WTC11 (cell line): ENCODE measurements at regions of chr20 and their contacts with region 1.

Region 1: DNA sequence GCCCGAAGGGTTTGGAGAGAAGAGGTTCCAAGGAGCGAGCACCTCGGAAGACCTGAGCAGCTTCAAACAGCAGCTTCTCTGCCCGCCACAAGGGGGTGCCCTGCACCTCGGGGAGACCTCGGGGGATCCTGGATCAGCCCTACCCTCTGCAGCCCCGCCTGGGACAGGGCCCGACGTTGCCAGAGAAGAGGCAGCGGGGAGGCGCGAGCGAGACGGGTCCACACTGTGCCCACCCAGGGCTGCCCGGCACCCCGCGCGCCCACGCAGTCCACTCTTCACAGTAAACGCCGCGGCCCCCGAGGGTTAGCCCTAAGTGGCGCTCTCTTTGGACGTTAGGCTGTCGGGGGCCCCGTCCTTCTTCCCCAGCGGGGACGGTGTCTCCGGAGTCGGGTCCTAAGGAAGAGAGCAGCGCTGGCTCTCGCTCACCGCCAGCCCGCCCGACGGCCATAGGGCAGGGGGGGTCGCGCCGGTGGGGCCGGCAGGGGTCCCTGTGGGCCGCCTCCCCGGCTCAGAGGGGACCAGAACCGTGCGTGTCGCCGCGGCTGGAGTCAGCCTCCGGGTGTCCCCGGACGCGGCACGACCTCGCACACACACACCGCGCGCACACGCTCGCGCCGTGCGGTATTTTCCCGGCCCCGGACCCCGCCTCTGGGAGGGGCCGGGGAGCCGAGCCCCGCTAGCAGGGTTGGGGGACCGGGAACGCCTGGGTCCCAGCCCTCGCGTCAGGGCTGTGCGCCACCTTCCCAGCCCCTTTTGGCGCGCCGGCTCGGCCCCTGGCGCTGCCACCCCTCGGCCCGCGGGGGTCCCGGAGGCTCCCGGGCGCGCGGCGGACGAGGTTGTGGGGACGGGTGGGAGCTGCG is 929 bp downstream of the CDH22 start:
- DNase-seq: peak; percentile 82
- ATAC-seq: peak; percentile 89
- H3K4me3 Mint-ChIP-seq: peak overlapping the region; percentile 52
- H3K27ac Mint-ChIP-seq: no peak overlapping the region
- H3K4me1 Mint-ChIP-seq: peaks cover 11% of the 10 kb centered on the region
- H3K27me3 Mint-ChIP-seq: peaks cover 72% of the 10 kb centered on the region
- CTCF ChIP-seq: peak; percentile 87

Region 2: GRCh38 chr20:46232539-46232938 is 74.8 kb before region 1 on chr20:
- CTCF ChIA-PET with region 1: no interaction called
- POLR2A ChIA-PET with region 1: no interaction called
- DNase-seq: no peak
- ATAC-seq: no peak
- H3K4me3 Mint-ChIP-seq: no peak overlapping the region
- H3K27ac Mint-ChIP-seq: no peak overlapping the region
- H3K4me1 Mint-ChIP-seq: peaks cover 7% of the 10 kb centered on the region; the same call in 1 of the 2 replicates
- H3K27me3 Mint-ChIP-seq: peaks cover 3% of the 10 kb centered on the region; the same call in 1 of the 2 replicates
- CTCF ChIP-seq: no peak

Region 3: DNA sequence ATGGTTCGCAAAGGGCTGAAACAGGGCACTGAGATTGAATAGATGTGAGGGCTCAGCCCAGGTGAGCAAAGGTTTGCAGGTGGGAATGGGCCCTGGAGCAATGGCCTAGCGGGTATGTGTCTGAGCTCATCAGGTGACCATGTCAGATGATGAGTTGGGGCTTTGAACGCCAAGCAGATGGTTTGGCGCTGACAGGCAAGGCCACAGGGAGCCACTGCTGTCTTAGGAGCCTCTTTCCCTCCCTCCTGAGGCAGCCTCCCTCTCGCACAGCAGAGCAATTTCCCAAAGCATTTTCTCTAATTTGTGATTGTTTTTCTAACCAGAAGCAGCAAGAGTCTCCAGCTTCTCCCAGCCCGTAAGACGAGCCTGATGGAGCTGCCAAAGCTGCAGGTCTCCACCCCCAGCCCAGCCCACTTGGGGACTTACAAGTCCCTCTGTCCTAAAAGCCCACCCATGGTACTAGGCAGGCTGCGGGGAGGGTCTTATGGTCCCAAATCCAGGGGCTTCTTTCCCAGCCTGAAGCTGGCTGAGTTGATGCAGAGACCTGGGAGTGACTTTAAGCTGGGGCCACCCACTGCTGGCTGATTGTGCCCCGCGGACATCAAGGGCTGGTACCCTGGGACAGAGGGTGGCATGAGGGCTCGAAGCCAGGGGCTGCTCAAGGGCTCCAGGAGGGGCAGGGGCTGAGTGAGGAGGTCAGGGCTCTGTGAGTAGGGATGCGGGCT is 10.7 kb before region 1 on chr20:
- CTCF ChIA-PET with region 1: interaction called, 10 read pairs
- POLR2A ChIA-PET with region 1: no interaction called
- DNase-seq: no peak
- ATAC-seq: no peak
- H3K4me3 Mint-ChIP-seq: no peak overlapping the region
- H3K27ac Mint-ChIP-seq: no peak overlapping the region
- H3K4me1 Mint-ChIP-seq: peaks cover 13% of the 10 kb centered on the region
- H3K27me3 Mint-ChIP-seq: peaks cover 3% of the 10 kb centered on the region
- CTCF ChIP-seq: no peak

Region 4: GRCh38 chr20:46330072-46330763 is 22.8 kb after region 1 on chr20:
- CTCF ChIA-PET with region 1: interaction called, 34 read pairs
- POLR2A ChIA-PET with region 1: no interaction called
- DNase-seq: no peak
- ATAC-seq: no peak
- H3K4me3 Mint-ChIP-seq: no peak overlapping the region
- H3K27ac Mint-ChIP-seq: no peak overlapping the region
- H3K4me1 Mint-ChIP-seq: peaks cover 36% of the 10 kb centered on the region
- H3K27me3 Mint-ChIP-seq: peaks cover 3% of the 10 kb centered on the region
- CTCF ChIP-seq: no peak

Region 5: DNA sequence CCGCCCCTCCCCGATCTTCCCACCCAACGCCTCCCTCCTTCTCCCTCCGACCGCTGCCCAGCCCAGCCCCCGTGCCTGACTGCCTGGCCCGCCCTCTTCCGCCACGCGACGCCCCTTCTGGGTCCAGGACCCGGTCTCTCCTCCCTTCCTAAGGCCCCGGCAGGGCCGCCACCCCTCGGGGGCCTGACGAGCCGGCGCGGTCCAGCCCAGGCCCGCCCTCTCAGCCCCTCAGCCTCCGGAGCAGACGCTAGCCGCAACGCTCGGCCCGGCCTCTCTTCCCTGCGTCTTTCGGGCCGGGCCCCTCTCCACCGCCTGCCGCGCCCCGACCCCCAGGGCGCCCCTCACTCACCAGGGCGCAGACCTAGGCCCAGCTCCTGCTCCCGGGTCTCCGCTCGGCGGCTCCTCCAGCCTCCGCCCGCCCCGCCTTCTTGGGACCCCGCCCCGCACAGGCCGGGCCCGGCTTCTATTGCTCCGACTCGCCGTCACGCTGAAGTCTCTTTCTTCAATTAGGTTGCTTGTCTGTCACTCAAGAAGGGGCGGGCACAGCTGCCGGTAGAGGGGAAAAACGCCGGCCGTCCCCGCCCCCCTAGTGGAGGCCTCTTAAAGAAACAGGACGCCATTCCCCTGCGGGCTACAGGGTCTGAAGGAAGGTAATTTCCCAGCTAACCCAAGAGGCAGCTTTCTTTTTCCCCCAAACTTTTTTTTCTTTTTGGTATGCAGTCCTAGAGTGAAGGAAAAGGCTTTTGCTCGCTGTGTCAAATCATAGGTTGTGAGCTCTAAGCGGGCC is 99.0 kb after region 1 on chr20 and contains the start of gene ELMO2:
- CTCF ChIA-PET with region 1: interaction called, 10 read pairs
- POLR2A ChIA-PET with region 1: no interaction called
- DNase-seq: peak; percentile 98
- ATAC-seq: peak; percentile 86
- H3K4me3 Mint-ChIP-seq: peak within 1 kb of the TSS; percentile 93
- H3K27ac Mint-ChIP-seq: peak within 1 kb of the TSS; percentile 83
- H3K4me1 Mint-ChIP-seq: peaks cover 33% of the 10 kb centered on the region
- H3K27me3 Mint-ChIP-seq: peaks cover 16% of the 10 kb centered on the region
- CTCF ChIP-seq: no peak
- total RNA-seq, gene ELMO2: 28.4 to 35.5 TPM (median 32.3 TPM) in 3 replicates

Region 6: DNA sequence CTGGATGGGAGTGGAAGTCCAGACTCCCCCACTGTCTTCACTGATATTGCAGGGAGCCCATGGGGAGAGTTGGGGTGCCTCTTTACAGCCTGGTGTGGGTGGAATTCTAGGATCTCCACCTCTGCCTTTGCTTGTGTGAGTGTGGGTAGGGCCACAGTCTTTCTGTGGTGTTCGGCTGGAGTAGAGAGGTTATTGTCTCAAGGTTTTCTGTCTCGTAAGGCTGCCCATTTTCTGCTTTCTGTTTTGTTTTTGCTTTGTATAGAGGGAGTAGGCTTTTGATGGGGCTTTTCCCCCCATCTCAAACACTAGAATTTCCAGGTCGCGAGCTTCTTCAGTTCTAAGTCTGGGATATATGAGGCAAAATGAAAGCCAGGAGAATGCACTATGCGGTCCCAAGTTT is 139.5 kb after region 1 on chr20:
- CTCF ChIA-PET with region 1: no interaction called
- POLR2A ChIA-PET with region 1: no interaction called
- DNase-seq: no peak
- ATAC-seq: no peak
- H3K4me3 Mint-ChIP-seq: no peak overlapping the region
- H3K27ac Mint-ChIP-seq: no peak overlapping the region
- H3K4me1 Mint-ChIP-seq: no peaks in the 10 kb centered on the region
- H3K27me3 Mint-ChIP-seq: no peaks in the 10 kb centered on the region; the same call in none of the 2 replicates
- CTCF ChIP-seq: no peak